Calu3 (cell line): ENCODE measurements at regions of chr5 and their contacts with region 1.

Region 1: DNA sequence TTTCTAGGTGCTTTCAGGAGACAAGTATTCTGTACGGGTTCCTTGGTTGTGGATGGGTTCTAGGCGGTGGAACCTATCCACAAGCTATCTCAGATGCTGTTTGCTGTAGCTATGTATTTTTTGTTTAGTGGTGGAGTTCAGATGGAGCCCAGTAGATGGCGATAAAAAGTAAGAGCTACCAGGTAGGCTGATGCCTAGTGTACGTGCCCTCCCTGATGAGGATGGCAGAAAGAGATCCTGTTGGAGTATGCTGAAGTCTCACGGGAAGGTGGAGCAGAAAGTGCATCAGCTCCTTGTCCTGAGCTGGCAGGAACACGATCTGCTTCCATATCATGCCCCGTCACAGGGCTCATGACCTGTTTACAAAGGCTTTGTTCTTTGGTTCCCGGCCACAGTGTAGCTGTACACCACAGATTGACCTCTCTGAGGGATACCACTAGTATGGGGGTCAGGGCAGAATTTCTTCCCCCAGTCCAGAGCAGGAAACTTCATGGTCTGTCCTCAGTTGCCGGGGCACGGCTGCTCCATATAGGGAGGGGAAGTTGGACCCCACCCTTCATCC is 12.6 kb upstream of the UGT3A2 start:
- DNase-seq: peak; percentile 53
- H3K4me3 Mint-ChIP-seq: no peak overlapping the region
- H3K27ac Mint-ChIP-seq: no peak overlapping the region
- H3K4me1 Mint-ChIP-seq: no peaks in the 10 kb centered on the region
- H3K27me3 Mint-ChIP-seq: peaks cover 39% of the 10 kb centered on the region
- CTCF ChIP-seq: peak; percentile 66

Region 2: GRCh38 chr5:36089989-36090564 is 10.8 kb after region 1 on chr5:
- CTCF ChIA-PET with region 1: interaction called, 11 read pairs
- intact Hi-C with region 1: no loop called
- DNase-seq: no peak
- H3K4me3 Mint-ChIP-seq: no peak overlapping the region
- H3K27ac Mint-ChIP-seq: no peak overlapping the region
- H3K4me1 Mint-ChIP-seq: no peaks in the 10 kb centered on the region
- H3K27me3 Mint-ChIP-seq: peaks cover 21% of the 10 kb centered on the region
- CTCF ChIP-seq: no peak

Region 3: DNA sequence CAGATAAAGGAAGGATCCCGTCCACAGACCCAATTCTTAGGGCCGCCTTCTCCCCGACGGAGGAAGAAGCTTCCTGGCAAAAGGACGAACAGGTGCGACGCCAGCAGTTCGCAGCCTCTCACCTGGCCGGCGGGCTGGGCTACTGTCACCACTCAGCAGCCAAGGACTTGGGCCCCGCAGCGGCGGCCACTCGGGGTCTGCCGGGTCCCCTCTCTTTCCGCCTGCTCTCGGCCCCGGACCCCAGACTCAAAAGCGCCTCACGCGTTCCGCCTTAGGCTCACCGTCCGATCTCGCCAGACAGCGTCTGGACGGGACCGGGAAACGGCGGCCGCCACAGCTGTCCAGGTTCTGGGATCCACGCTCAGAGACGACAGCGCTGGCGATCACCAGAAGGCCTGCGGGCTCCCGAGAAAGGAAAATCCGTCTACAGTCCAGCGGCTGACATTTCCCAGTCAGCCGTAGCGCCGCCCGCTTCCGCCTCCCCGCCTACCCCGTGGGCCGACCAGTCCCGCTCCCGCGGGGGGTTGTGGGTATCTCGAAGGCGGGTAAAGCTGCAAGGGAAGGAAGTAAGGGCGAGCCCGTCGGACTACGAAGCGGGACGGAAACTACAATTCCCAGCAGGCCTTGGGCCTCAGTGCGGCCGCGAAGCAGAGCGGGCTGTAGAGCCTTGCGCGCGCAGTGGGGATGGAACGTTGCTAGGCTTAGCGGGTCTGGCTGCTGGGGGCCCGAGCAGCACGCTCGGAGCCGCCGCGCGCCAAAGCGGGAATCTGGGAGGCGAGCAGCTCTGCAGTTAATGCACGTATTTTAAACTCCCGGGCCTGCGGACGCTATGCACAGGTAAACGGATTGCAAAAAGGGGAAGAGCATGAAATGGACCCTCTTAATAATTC is 72.4 kb after region 1 on chr5 and contains the starts of genes LMBRD2 and SKP2:
- CTCF ChIA-PET with region 1: interaction called, 8 read pairs
- intact Hi-C with region 1: loop called (anchors 5 kb)
- DNase-seq: peak; percentile 97
- H3K4me3 Mint-ChIP-seq: peak within 1 kb of the TSS; percentile 98
- H3K27ac Mint-ChIP-seq: peak within 1 kb of the TSS; percentile 73
- H3K4me1 Mint-ChIP-seq: peaks cover 24% of the 10 kb centered on the region
- H3K27me3 Mint-ChIP-seq: no peaks in the 10 kb centered on the region
- CTCF ChIP-seq: no peak
- total RNA-seq, gene LMBRD2: 12.1 and 13.8 TPM in 2 replicates
- total RNA-seq, gene SKP2: 23.7 and 26.1 TPM in 2 replicates

Region 4: GRCh38 chr5:36305571-36306326 is 226.5 kb after region 1 on chr5:
- CTCF ChIA-PET with region 1: interaction called, 4 read pairs
- intact Hi-C with region 1: loop called (anchors 2 kb)
- DNase-seq: peak; percentile 41
- H3K4me3 Mint-ChIP-seq: no peak overlapping the region
- H3K27ac Mint-ChIP-seq: no peak overlapping the region
- H3K4me1 Mint-ChIP-seq: peaks cover 6% of the 10 kb centered on the region
- H3K27me3 Mint-ChIP-seq: peaks cover 28% of the 10 kb centered on the region
- CTCF ChIP-seq: peak; percentile 54

Region 5: GRCh38 chr5:36397901-36398536 is 318.7 kb after region 1 on chr5:
- CTCF ChIA-PET with region 1: no interaction called
- intact Hi-C with region 1: loop called (anchors 10 kb)
- DNase-seq: no peak
- H3K4me3 Mint-ChIP-seq: no peak overlapping the region
- H3K27ac Mint-ChIP-seq: no peak overlapping the region
- H3K4me1 Mint-ChIP-seq: no peaks in the 10 kb centered on the region
- H3K27me3 Mint-ChIP-seq: no peaks in the 10 kb centered on the region
- CTCF ChIP-seq: no peak

Region 6: DNA sequence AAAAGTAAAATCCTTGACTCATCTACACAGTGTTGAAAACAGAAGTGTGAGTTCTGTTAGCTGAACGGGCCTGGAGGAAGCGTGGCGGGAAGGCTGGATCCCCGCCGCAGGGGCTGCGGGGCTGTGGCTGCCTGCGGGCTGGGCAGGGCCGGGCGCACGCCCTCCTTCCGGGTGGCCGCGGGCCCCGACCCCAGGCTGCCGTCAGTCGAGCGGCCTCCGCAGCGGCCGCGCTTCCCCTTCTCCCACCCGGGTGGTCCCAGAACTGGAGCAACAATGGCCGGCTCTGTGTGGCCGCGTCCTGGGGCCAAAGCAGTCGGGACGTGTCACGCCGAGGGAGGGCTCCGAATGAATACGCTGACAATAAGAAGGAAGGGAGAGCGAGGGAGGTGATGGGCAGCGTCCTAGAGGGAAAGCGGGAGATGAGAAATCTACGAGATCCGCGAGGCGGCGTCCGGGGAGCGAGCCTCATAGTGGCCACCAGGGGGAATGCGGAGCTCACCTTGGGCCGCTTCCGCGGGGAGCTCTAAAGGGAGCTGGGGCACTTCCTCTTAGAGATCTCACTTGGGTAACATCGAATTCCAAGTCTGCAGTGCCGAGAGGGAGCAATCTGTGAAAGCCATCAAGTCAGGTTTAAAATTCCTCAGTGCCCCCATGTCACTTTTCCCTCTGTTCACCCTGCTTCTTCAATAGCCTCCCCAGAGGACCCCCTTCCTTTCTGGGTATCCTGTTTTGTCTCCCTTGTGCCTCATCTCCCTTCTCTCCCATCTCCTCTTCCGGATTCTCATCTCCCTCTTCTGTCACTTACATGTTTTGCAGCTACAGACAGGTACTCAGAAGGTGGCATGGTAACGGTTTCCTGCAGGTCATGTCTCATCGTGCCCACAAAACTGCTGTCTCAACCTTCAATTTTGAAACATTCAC is 611.0 kb after region 1 on chr5:
- CTCF ChIA-PET with region 1: interaction called, 10 read pairs
- intact Hi-C with region 1: loop called (anchors 10 kb)
- DNase-seq: peak; percentile 87
- H3K4me3 Mint-ChIP-seq: peak overlapping the region; percentile 74
- H3K27ac Mint-ChIP-seq: peak overlapping the region; percentile 27
- H3K4me1 Mint-ChIP-seq: peaks cover 8% of the 10 kb centered on the region
- H3K27me3 Mint-ChIP-seq: no peaks in the 10 kb centered on the region
- CTCF ChIP-seq: peak; percentile 92

Region 7: DNA sequence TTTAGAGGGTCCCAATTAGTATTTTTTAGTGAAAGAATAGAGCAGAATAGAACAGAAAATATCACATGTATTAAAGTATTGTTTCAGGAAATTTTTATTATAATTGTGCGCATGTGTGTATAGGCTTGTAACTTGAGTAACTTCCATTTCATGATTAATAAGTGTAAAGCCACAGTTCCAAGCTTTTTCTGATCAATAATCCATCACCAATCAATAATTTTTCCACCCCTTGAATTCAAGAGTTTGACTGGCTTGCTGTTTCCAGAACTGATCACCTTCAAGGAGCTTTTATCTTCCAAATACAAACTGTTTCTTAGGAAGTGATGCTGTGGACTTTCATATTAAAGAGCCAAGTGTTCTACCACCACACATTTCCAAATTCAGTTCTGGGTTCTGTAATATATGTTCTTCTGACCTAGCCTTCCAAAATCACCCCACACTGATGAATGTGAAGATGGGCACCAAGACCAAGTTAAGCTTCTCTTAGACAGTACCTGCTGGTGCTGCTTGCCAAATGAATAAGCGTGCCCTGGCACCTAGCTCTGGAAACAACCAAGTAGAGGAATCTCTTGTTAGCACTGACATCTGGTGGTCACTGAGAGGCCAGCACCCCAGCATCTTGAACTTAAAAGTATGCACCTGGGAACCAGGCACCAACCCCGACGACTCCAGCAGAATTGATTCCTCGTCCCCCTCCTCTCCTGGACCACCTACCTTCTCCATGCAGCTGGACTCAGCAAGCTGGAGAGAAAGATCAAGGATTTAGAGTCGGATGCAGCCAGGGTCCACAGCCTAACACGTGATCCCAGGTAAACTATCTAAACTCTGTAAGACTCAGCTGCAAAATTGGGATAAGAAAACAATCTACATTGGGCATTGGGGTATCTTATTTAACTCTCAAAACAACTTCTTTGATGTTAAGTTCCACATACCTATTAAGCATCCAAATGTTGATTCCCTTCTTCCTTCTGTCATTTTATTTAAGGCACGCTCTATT is 616.7 kb after region 1 on chr5:
- CTCF ChIA-PET with region 1: interaction called, 10 read pairs
- intact Hi-C with region 1: loop called (anchors 10 kb)
- DNase-seq: peak; percentile 65
- H3K4me3 Mint-ChIP-seq: no peak overlapping the region
- H3K27ac Mint-ChIP-seq: no peak overlapping the region
- H3K4me1 Mint-ChIP-seq: peaks cover 1% of the 10 kb centered on the region
- H3K27me3 Mint-ChIP-seq: peaks cover 36% of the 10 kb centered on the region
- CTCF ChIP-seq: peak; percentile 69